Ovary (tissue), 10 donors: ENCODE measurements at regions of chr9 and their contacts with region 1.

Region 1: DNA sequence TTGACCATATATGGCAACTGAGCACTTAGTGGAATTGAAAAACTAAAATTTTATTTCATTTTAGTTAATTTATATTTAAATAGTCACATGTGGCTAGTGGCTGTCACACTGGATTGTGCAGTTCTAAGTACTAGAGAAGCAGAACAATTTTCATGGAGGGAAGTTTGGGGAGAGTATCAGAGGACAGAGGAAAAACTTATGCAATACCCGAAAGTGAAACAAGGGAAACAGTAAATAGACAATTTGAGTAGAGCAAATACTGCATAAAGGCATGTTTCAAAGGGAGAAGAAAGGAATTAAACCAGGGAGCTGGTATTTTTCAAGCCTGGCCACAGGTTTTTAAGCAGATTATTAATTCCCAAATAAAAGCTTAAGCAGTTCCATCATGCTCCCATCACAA is 590.5 kb upstream of the RORB start:
- DNase-seq: no peak
- H3K4me3 ChIP-seq: no peak overlapping the region
- H3K27ac ChIP-seq: no peak overlapping the region
- H3K4me1 ChIP-seq: no peaks in the 10 kb centered on the region
- H3K27me3 ChIP-seq: no peaks in the 10 kb centered on the region
- CTCF ChIP-seq: no peak
- EP300 ChIP-seq: no peak
- POLR2A ChIP-seq: no peak

Region 2: GRCh38 chr9:73799446-73799845 is 107.2 kb before region 1 on chr9:
- intact Hi-C with region 1: no loop called
- DNase-seq: no peak
- H3K4me3 ChIP-seq: no peak overlapping the region
- H3K27ac ChIP-seq: no peak overlapping the region
- H3K4me1 ChIP-seq: no peaks in the 10 kb centered on the region
- H3K27me3 ChIP-seq: peaks cover 3% of the 10 kb centered on the region
- CTCF ChIP-seq: no peak
- EP300 ChIP-seq: no peak
- POLR2A ChIP-seq: no peak

Region 3: DNA sequence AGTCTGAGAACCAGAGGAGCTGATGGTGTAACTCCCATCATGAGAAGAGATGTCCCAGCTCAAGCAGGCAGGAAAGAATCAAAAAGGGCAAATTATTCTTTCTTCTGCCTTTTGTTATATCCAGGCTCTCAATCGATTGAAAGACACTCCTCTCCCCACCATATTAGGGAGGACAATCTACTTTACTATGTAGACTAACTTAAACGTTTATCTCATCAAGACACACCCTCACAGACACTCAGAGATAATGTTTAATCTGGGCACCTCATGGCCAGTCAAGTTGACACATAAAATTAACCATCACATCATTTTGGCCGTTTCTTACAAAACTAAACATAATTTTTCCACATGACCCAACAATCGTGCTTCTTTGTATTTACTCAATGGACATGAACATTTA is 56.1 kb after region 1 on chr9:
- intact Hi-C with region 1: loop called in 1 of 4 experiments (anchors 10 kb)
- DNase-seq: no peak
- H3K4me3 ChIP-seq: no peak overlapping the region
- H3K27ac ChIP-seq: no peak overlapping the region
- H3K4me1 ChIP-seq: no peaks in the 10 kb centered on the region
- H3K27me3 ChIP-seq: no peaks in the 10 kb centered on the region
- CTCF ChIP-seq: no peak
- EP300 ChIP-seq: no peak
- POLR2A ChIP-seq: no peak